ENCODE measurements at regions of chr6 and their contacts with region 1.

Region 1: DNA sequence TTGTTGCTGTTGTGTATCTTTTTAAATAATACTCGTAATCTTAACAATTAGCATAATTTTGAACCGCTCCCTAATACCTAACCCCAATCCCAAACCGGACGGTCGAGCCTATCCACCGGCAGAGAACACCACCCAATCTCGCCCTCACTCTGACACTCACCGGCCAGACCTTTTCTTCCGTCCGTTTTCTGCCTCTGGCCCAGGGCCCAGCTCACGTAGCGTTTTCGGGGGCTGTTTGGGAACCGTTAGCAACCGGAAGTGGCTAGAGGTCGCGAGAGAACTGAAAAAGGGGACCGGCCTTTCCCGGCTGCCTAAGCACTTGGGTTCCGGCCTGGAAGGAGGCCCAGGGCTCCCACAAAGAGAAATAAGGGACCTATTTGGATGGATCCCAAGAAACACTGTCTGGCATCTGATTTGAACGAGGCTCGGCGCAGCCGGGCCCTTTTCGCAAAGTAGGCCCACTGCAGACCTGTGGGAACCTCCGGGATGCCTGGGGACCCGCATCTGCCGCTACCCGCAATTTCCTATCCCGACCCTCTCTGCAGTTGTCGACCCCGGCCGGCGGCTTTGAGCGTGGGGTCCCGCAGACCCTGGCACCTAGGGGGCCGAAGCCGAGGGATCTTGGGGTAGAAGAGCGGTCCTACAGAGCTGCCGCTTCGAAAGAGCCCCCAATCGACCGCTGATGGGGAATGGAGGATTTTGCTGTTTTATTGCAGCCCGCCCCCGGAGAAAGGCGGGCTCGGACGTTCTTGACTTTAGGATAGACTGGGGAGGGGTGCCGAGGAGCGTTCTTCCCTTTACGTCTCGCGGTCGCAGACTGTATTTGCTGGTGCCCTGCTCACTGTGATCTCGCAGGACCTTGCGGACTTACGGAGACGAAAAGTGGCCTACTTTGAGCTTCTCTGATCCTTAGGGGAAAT is 4.8 kb upstream of the ZKSCAN8 start:
- DNase-seq: peak; percentile 88 to 94
- ATAC-seq: peak; percentile 92 to 96 (median 93)
- H3K4me3 ChIP-seq: peak overlapping the region; percentile 69 to 93 (median 78)
- H3K27ac ChIP-seq: peak overlapping the region; percentile 81 to 97 (median 94)
- H3K4me1 ChIP-seq: peaks cover 0 to 58% (median 24%) of the 10 kb centered on the region in 9 donors
- H3K27me3 ChIP-seq: no peaks in the 10 kb centered on the region
- CTCF ChIP-seq: no peak

Region 2: GRCh38 chr6:28080631-28081485 is 56.0 kb before region 1 on chr6:
- intact Hi-C with region 1: loop called in 1 of 10 experiments (anchors 2 kb)
- DNase-seq: peak; percentile 91 to 96
- ATAC-seq: peak; percentile 98 to 99 (median 99)
- H3K4me3 ChIP-seq: peak overlapping the region; percentile 58 to 92 (median 74)
- H3K27ac ChIP-seq: peak overlapping the region; percentile 41 to 92 (median 86)
- H3K4me1 ChIP-seq: peaks cover 0 to 15% (median 12%) of the 10 kb centered on the region in 9 donors
- H3K27me3 ChIP-seq: no peaks in the 10 kb centered on the region
- CTCF ChIP-seq: no peak

Region 3: GRCh38 chr6:28218271-28219248 is 81.7 kb after region 1 on chr6:
- intact Hi-C with region 1: loop called in 4 of 10 experiments (anchors 5 to 10 kb)
- DNase-seq: peak; percentile 85
- ATAC-seq: peak; percentile 94 to 97 (median 96)
- H3K4me3 ChIP-seq: peak overlapping the region; percentile 38 to 73 (median 63)
- H3K27ac ChIP-seq: peak overlapping the region in 9 of 10 donors; percentile 75 to 90 (median 80)
- H3K4me1 ChIP-seq: peaks cover 2 to 16% (median 13%) of the 10 kb centered on the region in 9 donors
- H3K27me3 ChIP-seq: peaks cover 0 to 76% (median 51%) of the 10 kb centered on the region in 7 donors
- CTCF ChIP-seq: no peak

Region 4: GRCh38 chr6:28252009-28252975 is 115.4 kb after region 1 on chr6 and contains the start of gene ZKSCAN4:
- intact Hi-C with region 1: loop called in 5 of 10 experiments (anchors 5 to 10 kb)
- DNase-seq: peak; percentile 46 to 94
- ATAC-seq: peak; percentile 95 to 99 (median 98)
- H3K4me3 ChIP-seq: peak within 1 kb of the TSS; percentile 59 to 98 (median 89)
- H3K27ac ChIP-seq: peak within 1 kb of the TSS in 9 of 10 donors; percentile 28 to 87 (median 68)
- H3K4me1 ChIP-seq: peaks cover 9 to 36% (median 22%) of the 10 kb centered on the region in 9 donors
- H3K27me3 ChIP-seq: no peaks in the 10 kb centered on the region
- CTCF ChIP-seq: no peak
- total RNA-seq, gene ZKSCAN4: 0.55 to 3.6 (median 2.9) TPM

Region 5: DNA sequence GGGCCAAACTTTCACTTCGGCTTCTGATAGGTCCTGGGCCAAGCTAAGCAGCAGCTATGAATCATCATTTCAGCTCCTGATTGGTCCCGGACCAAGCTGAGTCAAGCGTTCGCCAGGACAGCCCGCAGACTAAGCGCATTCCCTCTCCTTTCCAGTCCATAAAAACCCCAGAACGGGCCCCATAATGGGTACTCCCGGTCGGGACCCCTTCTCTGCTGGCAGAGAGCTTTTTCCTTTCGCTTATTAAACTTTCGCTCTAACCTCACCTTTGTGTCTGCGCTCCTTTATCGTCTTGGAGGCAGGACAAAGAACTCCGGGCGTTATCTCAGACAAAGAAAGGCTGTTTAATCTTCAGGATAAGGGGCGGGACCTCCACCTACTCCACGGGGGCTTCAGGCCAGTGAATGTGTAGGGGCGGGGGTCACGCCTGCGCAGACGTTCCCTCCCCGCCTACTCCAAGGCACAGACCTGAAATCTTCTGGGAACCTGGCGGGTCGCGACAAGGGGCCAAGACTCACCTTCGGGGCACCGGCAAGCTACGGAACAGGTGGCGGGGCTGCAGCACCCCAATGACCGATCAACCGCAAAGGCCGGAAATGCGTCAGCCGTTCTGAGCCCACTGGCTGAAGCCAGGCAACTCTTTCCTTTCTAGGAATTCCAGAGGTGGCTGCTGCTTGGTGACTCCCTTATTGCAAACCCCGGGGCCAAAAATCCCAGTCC is 198.9 kb after region 1 on chr6 and contains the start of gene ZSCAN31:
- intact Hi-C with region 1: loop called in 2 of 10 experiments (anchors 5 kb)
- DNase-seq: peak; percentile 87 to 97
- ATAC-seq: peak; percentile 95 to 99 (median 97)
- H3K4me3 ChIP-seq: peak within 1 kb of the TSS; percentile 56 to 90 (median 66)
- H3K27ac ChIP-seq: peak within 1 kb of the TSS; percentile 88 to 97 (median 92)
- H3K4me1 ChIP-seq: peaks cover 0 to 25% (median 11%) of the 10 kb centered on the region in 9 donors
- H3K27me3 ChIP-seq: no peaks in the 10 kb centered on the region
- CTCF ChIP-seq: no peak
- total RNA-seq, gene ZSCAN31: 8.0 to 17.4 (median 11.9) TPM

Measured in heart right ventricle (tissue), 16 donors.